Lower leg skin (tissue), 4 donors: ENCODE measurements at regions of chr17 and their contacts with region 1.

Region 1: GRCh38 chr17:8654822-8655221 is 24.3 kb upstream of the MYH10 start:
- DNase-seq: no peak
- H3K4me3 ChIP-seq: no peak overlapping the region
- CTCF ChIP-seq: no peak
- POLR2A ChIP-seq: no peak

Region 2: DNA sequence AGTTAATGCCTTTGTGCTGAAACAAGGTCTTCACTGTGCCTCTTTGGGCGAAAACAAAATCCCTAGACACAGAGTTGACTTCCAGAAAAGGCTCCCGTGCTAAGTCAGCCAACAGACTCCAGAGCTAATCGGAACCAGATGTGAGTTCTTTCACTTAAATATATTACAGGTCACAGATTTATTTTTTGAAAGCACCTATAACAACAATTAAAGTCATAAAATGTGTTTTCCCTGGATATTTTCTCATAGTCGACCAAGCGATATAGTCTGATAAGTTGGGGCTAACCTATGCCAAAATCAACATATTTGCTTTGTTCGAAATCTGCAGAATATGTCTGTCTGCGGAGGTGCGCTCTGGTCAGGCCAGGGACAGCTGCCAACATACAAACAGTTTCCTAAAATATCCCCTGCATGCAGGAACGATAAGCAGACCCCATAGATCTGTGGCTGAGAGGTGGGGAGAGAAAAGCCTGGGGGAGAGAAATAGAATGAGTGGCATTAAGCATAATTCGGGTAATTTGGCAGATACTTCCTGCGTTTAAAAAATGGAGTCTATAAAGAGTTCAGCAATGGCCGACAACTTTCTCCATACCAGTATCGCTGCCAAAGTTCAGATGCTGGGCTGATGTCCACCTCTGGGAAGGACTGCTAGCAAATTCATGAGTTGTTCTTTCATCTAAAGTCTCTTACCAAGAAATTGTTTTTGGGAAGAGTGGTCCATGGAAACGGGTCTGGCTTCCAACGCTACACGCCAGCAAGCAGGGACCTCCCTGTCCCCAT is 26.5 kb after region 1 on chr17:
- intact Hi-C with region 1: loop called (anchors 1 kb)
- DNase-seq: peak in 1 of 2 donors; percentile 65
- H3K4me3 ChIP-seq: no peak overlapping the region
- CTCF ChIP-seq: no peak
- POLR2A ChIP-seq: no peak